A549 (cell line): ENCODE measurements at regions of chr15 and their contacts with region 1.

Region 1: GRCh38 chr15:34987985-34988873 is at the start of gene ZNF770:
- DNase-seq: peak; percentile 87 to 89
- ATAC-seq: peak; percentile 89 to 94
- H3K4me3 ChIP-seq: peak within 1 kb of the TSS; percentile 96
- H3K27ac ChIP-seq: peak within 1 kb of the TSS; percentile 95 to 98
- H3K4me1 ChIP-seq: peaks cover 28% of the 10 kb centered on the region
- CTCF ChIP-seq: no peak
- EP300 ChIP-seq: no peak
- POLR2A ChIP-seq: peak; percentile 98
- RAD21 ChIP-seq: no peak
- polyA plus RNA-seq, gene ZNF770: 46.2 and 49.0 TPM in 2 replicates

Region 2: GRCh38 chr15:35000511-35000910 is 12.3 kb after region 1 on chr15:
- CTCF ChIA-PET with region 1: interaction called, 6 read pairs
- POLR2A ChIA-PET with region 1: interaction called, 26 read pairs
- DNase-seq: peak; percentile 59 to 67
- ATAC-seq: peak; percentile 81 to 87
- H3K4me3 ChIP-seq: no peak overlapping the region
- H3K27ac ChIP-seq: peak overlapping the region; percentile 48 to 63
- H3K4me1 ChIP-seq: peaks cover 9% of the 10 kb centered on the region
- CTCF ChIP-seq: no peak
- EP300 ChIP-seq: no peak
- POLR2A ChIP-seq: no peak
- RAD21 ChIP-seq: no peak

Region 3: GRCh38 chr15:35013370-35013769 is 25.1 kb after region 1 on chr15:
- CTCF ChIA-PET with region 1: interaction called, 6 read pairs
- POLR2A ChIA-PET with region 1: interaction called, 27 read pairs
- DNase-seq: no peak
- ATAC-seq: no peak
- H3K4me3 ChIP-seq: no peak overlapping the region
- H3K27ac ChIP-seq: no peak overlapping the region
- H3K4me1 ChIP-seq: no peaks in the 10 kb centered on the region
- CTCF ChIP-seq: no peak
- EP300 ChIP-seq: no peak
- POLR2A ChIP-seq: no peak
- RAD21 ChIP-seq: no peak

Region 4: GRCh38 chr15:35019386-35020083 is 31.3 kb after region 1 on chr15:
- CTCF ChIA-PET with region 1: interaction called, 6 read pairs
- POLR2A ChIA-PET with region 1: interaction called, 27 read pairs
- DNase-seq: peak in 1 of 2 experiments; percentile 41
- ATAC-seq: peak in 1 of 2 experiments; percentile 28; a peak in 1 of 6 replicates
- H3K4me3 ChIP-seq: peak overlapping the region; percentile 42
- H3K27ac ChIP-seq: no peak overlapping the region
- H3K4me1 ChIP-seq: 0 out of 3 replicates have a peak, but pooled peaks cover 4% of the 10 kb centered on the region
- CTCF ChIP-seq: no peak
- EP300 ChIP-seq: no peak
- POLR2A ChIP-seq: no peak
- RAD21 ChIP-seq: no peak